CD4-positive, alpha-beta T cell (primary cell): ENCODE measurements at regions of chr20 and their contacts with region 1.

Region 1: DNA sequence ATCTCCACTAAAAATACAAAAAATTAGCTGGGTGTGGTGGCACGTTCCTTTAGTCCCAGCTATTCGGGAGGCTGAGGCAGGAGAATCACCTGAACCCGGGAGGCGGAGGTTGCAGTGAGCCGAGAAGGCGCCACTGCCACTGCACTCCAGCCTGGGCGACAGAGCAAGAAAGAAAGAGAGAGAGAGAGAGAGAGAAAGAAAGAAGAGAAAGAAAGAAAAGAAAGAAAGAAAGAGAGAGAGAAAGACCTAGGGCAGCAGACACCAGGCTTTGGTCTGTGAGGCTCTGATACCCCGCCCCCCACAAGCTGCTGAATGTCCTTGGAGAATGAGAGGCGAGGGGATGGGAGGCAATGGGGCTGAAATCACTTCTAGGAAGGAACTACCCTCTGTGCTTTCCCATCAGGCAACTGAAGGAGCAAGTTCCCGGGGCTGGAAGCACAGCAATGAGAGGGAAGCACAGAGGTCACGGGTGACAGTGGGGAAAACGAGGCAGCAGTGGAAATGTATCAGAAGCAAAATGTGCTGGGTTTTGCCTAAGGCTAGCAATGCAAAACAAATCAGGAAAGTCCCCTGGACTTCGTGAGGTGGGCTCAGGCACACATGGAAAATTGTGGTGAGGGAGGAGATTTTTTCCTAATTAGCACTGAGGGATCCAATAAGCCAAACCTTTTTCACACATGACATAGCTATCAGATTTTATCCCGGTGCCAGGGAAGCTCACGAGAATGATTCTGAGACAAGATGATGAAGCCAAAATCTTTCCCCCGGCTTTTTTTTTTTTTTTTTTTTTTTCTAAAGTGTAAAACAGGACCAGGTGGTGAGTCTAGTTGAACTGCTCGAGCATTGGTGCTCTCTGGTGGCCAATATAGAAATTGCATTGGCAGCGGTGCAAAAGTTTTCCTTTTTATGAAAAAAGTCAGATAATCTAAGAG is 16.9 kb upstream of the ARFGEF2 start:
- DNase-seq: peak; percentile 42 to 80 (median 59)
- ATAC-seq: peak; percentile 73
- H3K4me3 ChIP-seq: no peak overlapping the region
- H3K4me3 Mint-ChIP-seq: no peak overlapping the region
- H3K27ac ChIP-seq: no peak overlapping the region
- H3K27ac Mint-ChIP-seq: no peak overlapping the region
- H3K4me1 ChIP-seq: peaks cover 6% of the 10 kb centered on the region
- H3K4me1 Mint-ChIP-seq: peaks cover 4% of the 10 kb centered on the region
- H3K27me3 ChIP-seq: no peaks in the 10 kb centered on the region
- H3K27me3 Mint-ChIP-seq: no peaks in the 10 kb centered on the region
- CTCF ChIP-seq: peak; percentile 89

Region 2: GRCh38 chr20:48635433-48636310 is 269.0 kb before region 1 on chr20:
- CTCF ChIA-PET with region 1: interaction called, 3 read pairs
- POLR2A ChIA-PET with region 1: no interaction called
- intact Hi-C with region 1: loop called in 1 of 2 experiments (anchors 1 kb)
- DNase-seq: peak; percentile 32 to 77 (median 58)
- ATAC-seq: peak; percentile 75
- H3K4me3 ChIP-seq: no peak overlapping the region
- H3K4me3 Mint-ChIP-seq: no peak overlapping the region
- H3K27ac ChIP-seq: no peak overlapping the region
- H3K27ac Mint-ChIP-seq: peak overlapping the region; percentile 57
- H3K4me1 ChIP-seq: no peaks in the 10 kb centered on the region
- H3K4me1 Mint-ChIP-seq: no peaks in the 10 kb centered on the region
- H3K27me3 ChIP-seq: no peaks in the 10 kb centered on the region
- H3K27me3 Mint-ChIP-seq: no peaks in the 10 kb centered on the region
- CTCF ChIP-seq: peak; percentile 78

Region 3: GRCh38 chr20:48657475-48658470 is 246.9 kb before region 1 on chr20:
- CTCF ChIA-PET with region 1: interaction called, 31 read pairs
- POLR2A ChIA-PET with region 1: no interaction called
- intact Hi-C with region 1: loop called (anchors 1 kb)
- DNase-seq: peak; percentile 40 to 86 (median 52)
- ATAC-seq: peak; percentile 90
- H3K4me3 ChIP-seq: no peak overlapping the region
- H3K4me3 Mint-ChIP-seq: no peak overlapping the region
- H3K27ac ChIP-seq: no peak overlapping the region
- H3K27ac Mint-ChIP-seq: no peak overlapping the region
- H3K4me1 ChIP-seq: peaks cover 6% of the 10 kb centered on the region
- H3K4me1 Mint-ChIP-seq: peaks cover 5% of the 10 kb centered on the region
- H3K27me3 ChIP-seq: no peaks in the 10 kb centered on the region
- H3K27me3 Mint-ChIP-seq: no peaks in the 10 kb centered on the region
- CTCF ChIP-seq: peak; percentile 94

Region 4: GRCh38 chr20:49028684-49029083 is 124.1 kb after region 1 on chr20:
- CTCF ChIA-PET with region 1: no interaction called
- POLR2A ChIA-PET with region 1: no interaction called
- intact Hi-C with region 1: no loop called
- DNase-seq: no peak
- ATAC-seq: no peak
- H3K4me3 ChIP-seq: no peak overlapping the region
- H3K4me3 Mint-ChIP-seq: no peak overlapping the region
- H3K27ac ChIP-seq: no peak overlapping the region
- H3K27ac Mint-ChIP-seq: no peak overlapping the region
- H3K4me1 ChIP-seq: no peaks in the 10 kb centered on the region
- H3K4me1 Mint-ChIP-seq: no peaks in the 10 kb centered on the region
- H3K27me3 ChIP-seq: no peaks in the 10 kb centered on the region
- H3K27me3 Mint-ChIP-seq: no peaks in the 10 kb centered on the region
- CTCF ChIP-seq: no peak

Region 5: DNA sequence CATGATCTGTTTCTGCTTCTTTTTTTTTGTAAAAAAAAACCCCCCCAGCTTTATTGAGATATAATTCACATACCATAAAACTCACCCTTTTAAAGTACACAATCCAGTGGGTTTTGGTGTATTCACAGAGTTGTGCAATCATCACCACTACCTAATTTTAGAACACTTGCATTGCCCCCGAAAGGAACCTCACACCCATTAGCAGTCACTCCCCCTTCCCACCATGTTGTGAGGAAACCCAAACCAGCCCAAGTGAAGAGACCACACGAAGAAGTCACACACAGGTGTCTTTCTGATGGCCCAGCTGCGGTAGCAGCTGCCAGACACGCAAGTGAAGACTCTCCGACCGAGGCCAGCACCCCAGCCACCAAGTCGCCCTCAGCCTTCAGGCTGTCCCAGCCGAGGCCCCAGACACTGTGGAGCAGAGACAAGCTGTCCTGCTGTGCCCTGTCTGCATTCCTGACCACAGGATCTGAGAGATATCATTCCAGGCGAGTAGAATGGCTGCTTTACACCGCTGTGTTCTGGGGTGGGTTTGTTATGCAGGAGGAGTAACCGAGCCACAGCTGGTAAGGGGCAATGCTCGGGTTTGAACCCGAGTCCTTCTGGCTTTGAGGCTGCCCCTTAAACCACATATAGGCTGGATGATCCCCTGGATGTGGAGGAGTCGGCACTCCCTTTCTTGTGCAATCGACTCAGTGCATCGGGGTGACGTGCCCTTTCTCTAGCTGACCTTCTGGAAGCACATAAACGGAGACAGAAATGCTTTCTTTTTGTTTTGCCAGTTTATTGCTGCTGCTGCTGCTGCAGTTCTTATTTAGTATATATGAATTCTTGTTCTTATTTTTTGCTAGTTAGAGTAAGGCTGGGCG is 1546.5 kb after region 1 on chr20:
- CTCF ChIA-PET with region 1: no interaction called
- POLR2A ChIA-PET with region 1: no interaction called
- intact Hi-C with region 1: no loop called
- DNase-seq: peak in 3 of 14 experiments; percentile 29 to 49 (median 43)
- ATAC-seq: no peak
- H3K4me3 ChIP-seq: no peak overlapping the region
- H3K4me3 Mint-ChIP-seq: no peak overlapping the region
- H3K27ac ChIP-seq: no peak overlapping the region
- H3K27ac Mint-ChIP-seq: no peak overlapping the region
- H3K4me1 ChIP-seq: peaks cover 5% of the 10 kb centered on the region
- H3K4me1 Mint-ChIP-seq: no peaks in the 10 kb centered on the region
- H3K27me3 ChIP-seq: peaks cover 0 to 12% of the 10 kb centered on the region in 2 experiments
- H3K27me3 Mint-ChIP-seq: peaks cover 35% of the 10 kb centered on the region
- CTCF ChIP-seq: no peak